Activated naive CD4-positive, alpha-beta T cell treated with anti-CD3 and anti-CD28 coated beads for 36 hours (primary cell): ENCODE measurements at regions of chr6 and their contacts with region 1.

Region 1: GRCh38 chr6:156564127-156564806 is 212.9 kb upstream of the ARID1B start:
- DNase-seq: peak; percentile 86
- H3K4me3 Mint-ChIP-seq: no peak overlapping the region
- H3K27ac Mint-ChIP-seq: no peak overlapping the region
- H3K4me1 Mint-ChIP-seq: peaks cover 5% of the 10 kb centered on the region
- H3K27me3 Mint-ChIP-seq: peaks cover 2% of the 10 kb centered on the region

Region 2: GRCh38 chr6:155327326-155328073 is 1236.8 kb before region 1 on chr6:
- CTCF ChIA-PET with region 1: no interaction called
- intact Hi-C with region 1: loop called (anchors 5 kb)
- DNase-seq: peak; percentile 81
- H3K4me3 Mint-ChIP-seq: no peak overlapping the region
- H3K27ac Mint-ChIP-seq: peak overlapping the region; percentile 57
- H3K4me1 Mint-ChIP-seq: peaks cover 28% of the 10 kb centered on the region
- H3K27me3 Mint-ChIP-seq: no peaks in the 10 kb centered on the region

Region 3: DNA sequence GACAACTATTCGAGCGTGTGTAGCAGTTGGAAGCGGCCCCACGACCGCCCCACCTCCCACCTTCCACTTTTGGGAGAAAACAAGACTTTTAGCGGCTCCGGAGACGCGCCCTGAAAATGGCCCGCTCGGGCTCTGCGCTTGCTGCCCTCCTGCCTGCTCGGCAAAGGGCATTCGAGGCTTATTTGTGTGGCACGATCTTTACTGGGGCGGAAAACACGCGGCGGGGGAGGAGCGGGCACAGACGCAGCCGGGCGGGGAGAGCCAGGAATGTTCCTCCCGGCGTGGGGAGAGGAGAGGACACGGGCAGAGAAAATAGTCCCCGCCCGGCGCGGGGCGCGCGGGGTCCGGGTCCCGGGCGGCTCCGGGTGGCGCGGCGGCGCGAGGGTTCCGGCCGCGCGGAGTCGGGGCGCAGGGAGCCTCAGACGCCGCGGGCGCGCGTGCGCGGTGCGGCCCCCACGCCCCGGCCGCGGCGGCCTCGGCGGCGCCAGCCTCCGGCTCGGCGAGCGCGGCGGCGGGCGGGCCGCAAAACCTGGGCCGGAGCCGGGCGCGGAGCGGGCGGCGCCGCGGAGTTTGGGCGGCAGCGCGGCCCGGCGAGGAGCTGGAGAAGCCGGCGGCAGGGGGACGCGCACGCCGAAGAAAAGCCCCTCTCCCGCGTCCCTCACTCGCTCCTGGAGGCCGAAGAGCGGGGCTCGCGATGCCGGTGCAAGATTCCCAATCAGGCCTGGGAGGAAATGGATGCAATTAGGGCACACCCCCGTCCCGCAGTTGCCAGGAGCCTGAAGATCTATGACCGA is 122.9 kb after region 1 on chr6:
- CTCF ChIA-PET with region 1: no interaction called
- intact Hi-C with region 1: loop called (anchors 1 kb)
- DNase-seq: peak; percentile 63
- H3K4me3 Mint-ChIP-seq: peak overlapping the region; percentile 82
- H3K27ac Mint-ChIP-seq: peak overlapping the region; percentile 91
- H3K4me1 Mint-ChIP-seq: peaks cover 32% of the 10 kb centered on the region
- H3K27me3 Mint-ChIP-seq: no peaks in the 10 kb centered on the region

Region 4: DNA sequence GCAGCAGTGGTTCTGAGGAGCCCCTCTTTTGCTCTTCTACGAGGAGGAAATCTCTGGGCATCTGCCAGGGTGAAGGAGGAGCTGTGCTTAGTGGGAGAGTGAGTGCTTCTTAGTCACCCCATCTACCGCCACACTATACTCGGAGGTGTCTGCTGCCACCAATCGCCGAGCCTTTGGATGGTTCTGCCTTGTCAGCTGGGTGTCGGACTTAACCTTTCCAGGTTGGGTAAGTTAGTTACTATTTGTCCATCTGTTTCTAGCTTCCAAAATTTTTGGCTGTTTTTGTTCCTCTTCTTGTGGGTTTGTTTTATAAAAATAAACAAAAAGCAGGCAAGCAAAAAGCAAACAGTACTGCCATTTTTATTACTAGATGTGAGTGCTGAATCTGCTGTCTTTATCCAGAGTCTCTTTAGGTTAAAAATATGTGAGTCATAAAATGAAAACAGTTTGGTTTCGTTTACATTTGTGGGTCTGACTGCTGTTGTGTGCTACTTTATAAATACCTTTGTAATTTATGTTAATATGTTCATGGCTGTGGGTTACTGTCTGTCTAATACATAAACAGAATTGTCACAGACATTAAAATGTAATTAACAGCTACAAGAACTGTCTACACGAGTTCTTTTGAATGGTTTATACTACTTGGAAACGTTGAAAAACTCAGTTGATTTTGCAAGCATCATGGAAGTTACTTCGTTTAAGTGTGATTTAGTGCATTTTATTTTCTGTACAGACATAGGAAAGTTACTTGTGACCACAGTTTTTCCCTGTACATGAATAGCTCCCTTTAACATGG is 302.2 kb after region 1 on chr6:
- CTCF ChIA-PET with region 1: no interaction called
- intact Hi-C with region 1: loop called (anchors 1 kb)
- DNase-seq: peak; percentile 57
- H3K4me3 Mint-ChIP-seq: no peak overlapping the region
- H3K27ac Mint-ChIP-seq: peak overlapping the region; percentile 17
- H3K4me1 Mint-ChIP-seq: peaks cover 67% of the 10 kb centered on the region
- H3K27me3 Mint-ChIP-seq: no peaks in the 10 kb centered on the region

Region 5: GRCh38 chr6:157184202-157185020 is 620.1 kb after region 1 on chr6:
- CTCF ChIA-PET with region 1: no interaction called
- intact Hi-C with region 1: loop called (anchors 2 kb)
- DNase-seq: peak; percentile 69
- H3K4me3 Mint-ChIP-seq: no peak overlapping the region
- H3K27ac Mint-ChIP-seq: no peak overlapping the region
- H3K4me1 Mint-ChIP-seq: peaks cover 10% of the 10 kb centered on the region
- H3K27me3 Mint-ChIP-seq: no peaks in the 10 kb centered on the region

Region 6: DNA sequence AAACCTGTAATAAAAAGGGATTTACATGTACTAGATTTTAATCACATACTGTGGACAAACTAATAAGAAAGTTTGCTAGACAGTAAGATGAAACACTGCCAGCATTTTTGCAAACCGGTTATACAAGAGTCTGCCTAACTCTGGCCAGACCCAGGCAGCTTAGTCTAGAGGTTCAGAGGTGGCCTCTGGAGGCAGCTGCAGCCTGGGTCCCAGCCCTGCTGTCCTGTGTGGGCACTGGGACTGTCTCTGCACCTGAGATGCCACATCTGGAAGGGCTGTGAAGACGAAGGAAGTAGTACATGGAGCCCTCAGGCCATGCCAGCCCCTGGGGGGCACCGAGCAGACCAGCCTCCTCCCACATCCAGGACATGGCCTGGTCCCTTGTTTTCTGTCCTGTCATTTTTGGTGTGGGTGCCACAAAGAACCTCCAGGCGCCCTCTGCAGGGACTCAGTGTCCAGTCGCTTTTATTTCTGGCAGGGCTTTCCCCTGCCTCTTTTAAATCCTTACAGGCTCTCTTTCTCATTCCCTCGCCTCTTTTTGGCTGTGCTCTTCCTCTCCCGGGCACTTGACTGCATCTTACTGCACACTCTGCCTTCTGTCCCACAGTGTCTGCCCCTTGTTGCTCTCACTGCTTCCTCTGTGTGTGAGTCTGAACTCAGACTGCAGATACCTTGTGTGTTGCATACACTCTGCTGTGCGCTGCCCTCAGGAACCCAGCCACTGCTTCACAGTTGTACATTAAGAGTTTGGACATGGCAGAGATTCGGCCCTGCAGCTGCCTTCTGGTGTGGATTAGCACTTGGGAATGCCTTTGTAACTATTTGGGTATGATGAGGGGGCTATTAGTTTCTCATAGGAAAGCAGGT is 1033.4 kb after region 1 on chr6:
- CTCF ChIA-PET with region 1: no interaction called
- intact Hi-C with region 1: no loop called
- DNase-seq: peak; percentile 69
- H3K4me3 Mint-ChIP-seq: no peak overlapping the region
- H3K27ac Mint-ChIP-seq: no peak overlapping the region
- H3K4me1 Mint-ChIP-seq: no peaks in the 10 kb centered on the region
- H3K27me3 Mint-ChIP-seq: no peaks in the 10 kb centered on the region